ENCODE measurements at regions of chr17 and their contacts with region 1.

Region 1: DNA sequence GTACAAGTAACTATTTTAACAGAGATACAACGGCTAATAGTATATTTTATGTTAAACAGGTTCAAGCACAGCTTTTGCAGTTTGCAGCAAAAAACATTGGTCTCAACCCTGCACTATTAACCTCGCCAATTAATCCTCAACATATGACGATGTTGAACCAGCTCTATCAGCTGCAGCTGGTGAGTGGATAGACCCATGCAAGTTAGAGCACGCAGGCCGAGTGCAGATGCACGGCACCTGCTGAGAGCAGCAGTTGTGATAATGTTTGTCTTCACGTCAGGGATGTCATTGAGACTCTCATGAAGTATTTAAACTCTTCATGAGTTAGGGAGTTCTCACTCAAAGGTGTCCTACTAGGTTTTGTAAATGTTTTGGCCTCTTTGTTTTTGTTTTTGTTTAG is 45.6 kb downstream of the TMC6 start:
- DNase-seq: no peak
- ATAC-seq: no peak
- H3K4me3 Mint-ChIP-seq: no peak overlapping the region
- H3K27ac Mint-ChIP-seq: no peak overlapping the region
- H3K4me1 Mint-ChIP-seq: no peaks in the 10 kb centered on the region
- H3K27me3 Mint-ChIP-seq: no peaks in the 10 kb centered on the region
- CTCF ChIP-seq: no peak

Region 2: GRCh38 chr17:77930780-77931768 is 151.9 kb before region 1 on chr17:
- CTCF ChIA-PET with region 1: no interaction called
- POLR2A ChIA-PET with region 1: no interaction called
- intact Hi-C with region 1: no loop called
- DNase-seq: no peak
- ATAC-seq: no peak
- H3K4me3 Mint-ChIP-seq: no peak overlapping the region
- H3K27ac Mint-ChIP-seq: no peak overlapping the region
- H3K4me1 Mint-ChIP-seq: peaks cover 32% of the 10 kb centered on the region
- H3K27me3 Mint-ChIP-seq: peaks cover 1% of the 10 kb centered on the region
- CTCF ChIP-seq: no peak

Region 3: GRCh38 chr17:77942112-77942988 is 140.6 kb before region 1 on chr17:
- CTCF ChIA-PET with region 1: no interaction called
- POLR2A ChIA-PET with region 1: no interaction called
- intact Hi-C with region 1: no loop called
- DNase-seq: no peak
- ATAC-seq: no peak
- H3K4me3 Mint-ChIP-seq: no peak overlapping the region
- H3K27ac Mint-ChIP-seq: no peak overlapping the region
- H3K4me1 Mint-ChIP-seq: no peaks in the 10 kb centered on the region
- H3K27me3 Mint-ChIP-seq: no peaks in the 10 kb centered on the region
- CTCF ChIP-seq: no peak

Region 4: DNA sequence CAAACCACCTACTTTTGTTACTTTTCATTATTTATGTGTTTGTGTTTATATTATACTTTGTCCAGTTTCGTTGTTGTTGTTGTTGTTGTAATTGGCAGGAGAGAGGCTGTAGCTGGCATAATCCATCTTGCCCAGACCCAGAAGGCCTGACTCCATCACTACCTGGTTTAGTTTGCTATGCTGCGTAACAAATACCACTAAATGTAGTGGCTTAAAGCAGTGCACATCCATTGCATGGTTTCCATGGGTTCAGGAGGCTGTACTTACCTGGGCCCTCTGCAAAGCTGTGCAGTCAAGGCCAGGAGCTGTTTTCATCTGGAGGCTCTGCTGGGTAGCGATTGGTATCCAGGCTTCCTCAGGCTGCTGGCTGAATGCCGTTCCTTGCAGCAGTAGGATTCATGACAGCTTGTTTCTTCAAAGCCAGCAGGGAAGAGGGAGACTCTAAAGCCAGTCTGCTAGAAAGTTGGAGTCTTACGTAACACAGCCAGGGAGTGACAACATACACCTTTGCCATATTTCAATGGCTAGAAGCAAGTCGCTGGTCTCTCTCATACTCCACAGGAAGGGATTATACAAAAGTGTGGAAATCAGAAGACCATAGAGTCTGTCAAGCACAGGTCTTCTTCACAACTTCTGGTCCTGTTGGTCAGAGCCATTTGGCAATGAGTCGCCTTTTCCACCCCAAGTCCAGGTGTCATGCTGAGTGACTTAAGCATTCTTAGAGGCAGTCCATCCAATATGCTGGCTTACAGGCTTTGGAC is 83.4 kb before region 1 on chr17:
- CTCF ChIA-PET with region 1: no interaction called
- POLR2A ChIA-PET with region 1: no interaction called
- intact Hi-C with region 1: no loop called
- DNase-seq: peak; percentile 55
- ATAC-seq: peak; percentile 68
- H3K4me3 Mint-ChIP-seq: no peak overlapping the region
- H3K27ac Mint-ChIP-seq: no peak overlapping the region
- H3K4me1 Mint-ChIP-seq: peaks cover 69% of the 10 kb centered on the region
- H3K27me3 Mint-ChIP-seq: no peaks in the 10 kb centered on the region
- CTCF ChIP-seq: no peak

Region 5: GRCh38 chr17:78019367-78019975 is 63.5 kb before region 1 on chr17:
- CTCF ChIA-PET with region 1: interaction called, 21 read pairs
- POLR2A ChIA-PET with region 1: no interaction called
- intact Hi-C with region 1: no loop called
- DNase-seq: no peak
- ATAC-seq: no peak
- H3K4me3 Mint-ChIP-seq: no peak overlapping the region
- H3K27ac Mint-ChIP-seq: peak overlapping the region; percentile 90
- H3K4me1 Mint-ChIP-seq: peaks cover 31% of the 10 kb centered on the region
- H3K27me3 Mint-ChIP-seq: no peaks in the 10 kb centered on the region
- CTCF ChIP-seq: peak; percentile 72

Region 6: DNA sequence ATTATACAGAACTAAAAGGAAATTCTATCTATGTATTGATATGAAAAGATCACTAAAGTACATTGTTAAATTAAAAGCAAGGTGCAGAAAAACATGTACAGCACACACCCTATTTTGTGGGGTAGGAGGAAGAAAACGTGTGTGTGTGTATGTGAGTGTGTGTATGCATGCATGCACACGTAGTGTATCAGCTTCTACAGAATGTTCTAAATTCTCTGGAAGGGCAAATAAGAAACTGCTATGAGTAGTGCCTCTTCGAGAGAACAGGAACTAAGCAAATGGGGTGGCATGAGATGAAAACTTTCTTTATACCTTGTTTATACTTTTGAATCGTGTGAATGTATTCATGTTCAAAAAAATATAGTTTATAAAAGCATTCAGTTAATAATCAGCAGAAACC is 13.3 kb before region 1 on chr17:
- CTCF ChIA-PET with region 1: interaction called, 11 read pairs
- POLR2A ChIA-PET with region 1: no interaction called
- intact Hi-C with region 1: no loop called
- DNase-seq: no peak
- ATAC-seq: no peak
- H3K4me3 Mint-ChIP-seq: no peak overlapping the region
- H3K27ac Mint-ChIP-seq: no peak overlapping the region
- H3K4me1 Mint-ChIP-seq: peaks cover 2% of the 10 kb centered on the region
- H3K27me3 Mint-ChIP-seq: no peaks in the 10 kb centered on the region
- CTCF ChIP-seq: no peak

Region 7: DNA sequence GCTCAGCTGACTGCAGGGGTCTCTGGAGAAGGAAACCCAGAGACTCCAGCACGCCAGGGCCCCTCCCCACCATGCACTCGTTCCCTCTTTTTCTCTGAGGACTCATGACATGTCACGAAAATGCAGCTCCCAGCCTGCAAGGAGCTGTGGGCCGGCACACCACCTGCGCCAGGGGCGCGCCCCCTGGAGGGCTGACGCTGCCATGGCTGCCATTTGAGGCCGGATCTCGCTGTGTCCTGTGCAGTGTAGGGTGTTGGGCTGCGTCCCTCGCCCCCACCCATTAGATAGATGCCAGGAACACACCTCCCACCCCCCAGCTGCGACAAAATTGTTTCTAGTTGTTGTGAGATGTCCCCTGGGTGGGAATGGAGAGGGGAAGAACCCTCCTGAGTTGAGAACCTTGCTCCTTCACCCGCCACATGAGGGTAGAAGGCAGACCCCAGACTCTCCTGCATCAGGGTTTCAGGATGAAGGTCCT is 93.6 kb after region 1 on chr17:
- CTCF ChIA-PET with region 1: interaction called, 25 read pairs
- POLR2A ChIA-PET with region 1: no interaction called
- intact Hi-C with region 1: no loop called
- DNase-seq: peak; percentile 81
- ATAC-seq: peak; percentile 87
- H3K4me3 Mint-ChIP-seq: no peak overlapping the region
- H3K27ac Mint-ChIP-seq: no peak overlapping the region
- H3K4me1 Mint-ChIP-seq: peaks cover 40% of the 10 kb centered on the region
- H3K27me3 Mint-ChIP-seq: no peaks in the 10 kb centered on the region
- CTCF ChIP-seq: peak; percentile 93

Region 8: DNA sequence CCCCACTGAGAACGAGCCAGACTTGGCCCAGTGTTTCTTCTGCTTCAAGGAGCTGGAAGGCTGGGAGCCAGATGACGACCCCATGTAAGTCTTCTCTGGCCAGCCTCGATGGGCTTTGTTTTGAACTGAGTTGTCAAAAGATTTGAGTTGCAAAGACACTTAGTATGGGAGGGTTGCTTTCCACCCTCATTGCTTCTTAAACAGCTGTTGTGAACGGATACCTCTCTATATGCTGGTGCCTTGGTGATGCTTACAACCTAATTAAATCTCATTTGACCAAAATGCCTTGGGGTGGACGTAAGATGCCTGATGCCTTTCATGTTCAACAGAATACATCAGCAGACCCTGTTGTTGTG is 131.7 kb after region 1 on chr17:
- CTCF ChIA-PET with region 1: interaction called, 10 read pairs
- POLR2A ChIA-PET with region 1: no interaction called
- intact Hi-C with region 1: no loop called
- DNase-seq: no peak
- ATAC-seq: no peak
- H3K4me3 Mint-ChIP-seq: peak overlapping the region; percentile 96
- H3K27ac Mint-ChIP-seq: peak overlapping the region; percentile 87
- H3K4me1 Mint-ChIP-seq: peaks cover 9% of the 10 kb centered on the region
- H3K27me3 Mint-ChIP-seq: no peaks in the 10 kb centered on the region
- CTCF ChIP-seq: no peak

Measured in activated CD8-positive, alpha-beta T cell treated with anti-CD3 and anti-CD28 coated beads for 36 hours (primary cell).